ENCODE measurements at regions of chr1 and their contacts with region 1.

Region 1: GRCh38 chr1:182781841-182782586 is 7.6 kb upstream of the NPL start:
- DNase-seq: peak; percentile 23 to 95 (median 71)

Region 2: DNA sequence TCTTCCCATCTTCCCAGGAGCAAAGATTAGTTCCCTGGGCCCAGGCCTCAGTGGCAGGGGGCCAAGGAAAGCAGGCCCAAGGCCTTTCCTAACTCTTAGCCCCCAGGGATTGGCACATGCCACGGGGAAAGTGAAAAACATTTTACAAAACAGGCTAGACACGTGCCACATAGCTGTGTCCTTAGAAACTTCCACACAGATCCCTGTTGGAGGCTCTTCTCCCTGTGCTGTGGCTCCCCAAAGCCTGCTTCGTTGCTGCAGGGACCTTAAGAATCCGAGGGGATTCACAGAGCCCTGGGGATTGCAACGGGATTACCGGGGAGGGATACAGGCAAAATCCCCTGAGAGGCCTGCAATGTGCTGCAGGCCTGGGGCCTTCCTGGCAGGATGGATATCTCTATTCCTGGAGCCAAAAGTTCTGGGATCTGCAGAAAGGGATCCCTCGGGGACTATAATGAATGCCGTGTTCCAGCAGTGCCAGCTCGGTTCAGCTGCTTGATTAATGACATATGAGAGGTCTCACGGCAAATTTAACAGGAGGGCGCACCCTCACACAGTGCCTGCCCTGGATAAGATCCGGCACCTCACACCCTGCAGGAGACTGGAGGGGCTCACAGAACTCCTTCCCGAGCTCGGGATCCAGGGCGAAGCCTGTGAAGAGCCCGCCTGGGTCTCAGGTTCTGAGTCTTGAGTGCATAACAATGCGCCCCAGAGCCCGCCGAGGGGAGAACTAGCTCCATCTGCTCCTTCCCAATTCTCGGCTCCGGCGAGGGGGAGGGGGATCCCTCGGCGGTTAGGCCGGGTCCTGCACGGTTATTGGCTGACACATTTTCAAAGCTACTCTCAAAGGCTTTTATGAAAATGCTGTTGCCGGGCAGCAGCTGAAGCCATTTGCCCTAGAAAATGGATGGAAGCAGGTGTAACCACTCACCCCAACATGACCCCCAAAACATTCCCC is 82.3 kb before region 1 on chr1:
- intact Hi-C with region 1: loop called (anchors 5 kb)
- DNase-seq: peak in 4 of 10 donors; percentile 16 to 86 (median 48)

Region 3: GRCh38 chr1:182845379-182845778 is 63.4 kb after region 1 on chr1:
- intact Hi-C with region 1: no loop called
- DNase-seq: no peak